Naive thymus-derived CD4-positive, alpha-beta T cell (primary cell): ENCODE measurements at regions of chr22 and their contacts with region 1.

Region 1: DNA sequence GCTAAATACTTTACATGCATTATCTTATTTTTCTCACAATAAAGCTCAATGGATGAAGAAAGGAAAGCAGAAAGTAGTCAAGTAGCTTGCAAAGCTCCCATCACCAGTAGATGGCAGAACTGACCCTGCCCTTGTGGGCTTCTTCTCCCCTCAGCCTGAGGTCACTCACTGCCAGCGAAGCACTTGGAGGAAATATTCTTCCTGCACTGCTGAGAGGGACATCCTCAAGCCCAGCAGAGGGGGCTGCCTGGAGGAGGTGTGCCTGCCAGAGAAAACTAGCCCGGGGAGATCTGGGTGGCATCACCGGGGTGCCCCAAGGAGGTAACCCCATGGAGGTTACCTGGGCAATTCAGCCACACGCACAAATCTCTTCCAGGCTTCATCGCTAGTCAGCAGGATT is 6.6 kb downstream of the APOL4 start:
- DNase-seq: peak in 7 of 9 donors; percentile 15 to 41 (median 32)
- ATAC-seq: peak; percentile 77
- H3K4me3 ChIP-seq: no peak overlapping the region
- H3K4me3 Mint-ChIP-seq: no peak overlapping the region
- H3K27ac ChIP-seq: no peak overlapping the region
- H3K27ac Mint-ChIP-seq: no peak overlapping the region
- H3K4me1 ChIP-seq: peaks cover 0 to 4% of the 10 kb centered on the region in 2 donors
- H3K4me1 Mint-ChIP-seq: peaks cover 0 to 23% (median 14%) of the 10 kb centered on the region in 7 donors
- H3K27me3 ChIP-seq: no peaks in the 10 kb centered on the region
- H3K27me3 Mint-ChIP-seq: peaks cover 0 to 16% (median 0%) of the 10 kb centered on the region in 5 donors

Region 2: DNA sequence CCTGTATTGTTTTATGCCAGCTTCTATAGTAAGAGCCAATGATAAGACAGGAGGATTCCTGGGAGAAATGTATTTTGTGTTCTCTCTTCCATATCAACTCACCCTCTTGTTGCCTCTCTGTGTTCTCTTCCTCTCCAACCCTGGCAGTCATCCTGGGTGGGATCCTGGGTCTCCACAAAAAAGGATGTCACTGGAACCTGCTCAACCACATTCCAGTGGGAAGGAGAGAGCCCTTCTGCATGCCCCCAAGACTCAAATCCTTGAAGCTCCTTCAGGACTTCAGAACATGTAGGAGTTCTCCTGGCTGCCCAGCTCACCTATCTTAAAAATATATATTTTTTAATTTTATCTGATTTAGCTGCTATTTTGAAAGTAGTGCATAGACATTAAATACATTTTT is 520.6 kb before region 1 on chr22:
- CTCF ChIA-PET with region 1: no interaction called
- POLR2A ChIA-PET with region 1: no interaction called
- intact Hi-C with region 1: no loop called
- DNase-seq: no peak
- ATAC-seq: no peak
- H3K4me3 ChIP-seq: no peak overlapping the region
- H3K4me3 Mint-ChIP-seq: no peak overlapping the region
- H3K27ac ChIP-seq: no peak overlapping the region
- H3K27ac Mint-ChIP-seq: no peak overlapping the region
- H3K4me1 ChIP-seq: no peaks in the 10 kb centered on the region
- H3K4me1 Mint-ChIP-seq: peaks cover 0 to 3% (median 0%) of the 10 kb centered on the region in 7 donors
- H3K27me3 ChIP-seq: no peaks in the 10 kb centered on the region
- H3K27me3 Mint-ChIP-seq: no peaks in the 10 kb centered on the region

Region 3: DNA sequence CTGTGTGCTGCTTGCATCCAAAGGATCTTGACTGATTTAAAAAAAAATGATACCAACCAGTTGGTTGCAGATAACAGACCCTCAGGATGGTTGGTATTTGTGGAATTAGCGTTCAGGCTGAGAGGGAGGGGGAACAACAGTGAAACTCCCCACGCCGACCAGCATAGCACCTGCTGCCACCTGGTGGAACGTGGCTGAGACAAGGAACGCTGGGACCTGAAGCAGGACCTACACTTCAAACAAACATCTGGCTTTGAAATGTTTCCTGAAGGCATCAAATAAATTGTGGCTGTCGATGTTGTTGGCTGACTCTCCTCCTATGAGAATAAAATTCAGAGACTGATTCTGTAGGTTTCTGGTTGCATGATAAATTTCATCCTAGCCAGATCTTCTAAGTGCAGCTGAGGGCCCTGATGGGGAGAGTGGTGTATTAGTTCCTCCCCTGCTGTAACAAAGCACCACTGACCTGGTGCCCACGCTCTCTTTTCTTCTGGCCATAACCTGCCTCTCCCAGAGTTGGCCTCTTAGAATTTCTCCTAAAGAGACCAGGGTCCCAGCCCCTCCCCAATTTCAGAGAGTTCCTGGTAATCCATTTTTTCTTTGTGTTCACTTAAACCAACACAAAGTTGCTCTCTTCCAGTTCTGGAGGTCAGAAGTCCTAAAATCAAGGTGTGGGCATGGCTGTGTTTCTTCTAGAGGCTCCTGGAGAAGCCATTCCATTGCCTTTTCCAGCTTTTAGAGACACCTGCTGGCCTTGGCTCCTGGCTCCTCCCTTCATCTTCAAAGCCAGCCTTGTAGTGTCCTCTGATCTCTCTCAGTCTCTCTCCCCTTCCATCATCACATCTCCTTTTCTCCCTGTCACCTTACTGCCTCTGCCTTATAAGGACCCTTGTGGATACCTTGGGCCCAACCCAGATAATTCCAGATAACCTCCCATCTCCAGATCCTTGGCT is 27.1 kb after region 1 on chr22:
- CTCF ChIA-PET with region 1: no interaction called
- POLR2A ChIA-PET with region 1: no interaction called
- intact Hi-C with region 1: loop called (anchors 1 to 2 kb)
- DNase-seq: peak in 8 of 9 donors; percentile 12 to 41 (median 26)
- ATAC-seq: peak; percentile 93
- H3K4me3 ChIP-seq: no peak overlapping the region
- H3K4me3 Mint-ChIP-seq: peak overlapping the region in 8 of 10 donors; percentile 22 to 73 (median 60)
- H3K27ac ChIP-seq: no peak overlapping the region
- H3K27ac Mint-ChIP-seq: peak overlapping the region in 4 of 9 donors; percentile 28 to 57 (median 46)
- H3K4me1 ChIP-seq: no peaks in the 10 kb centered on the region
- H3K4me1 Mint-ChIP-seq: peaks cover 8 to 16% (median 13%) of the 10 kb centered on the region in 7 donors
- H3K27me3 ChIP-seq: no peaks in the 10 kb centered on the region
- H3K27me3 Mint-ChIP-seq: peaks cover 0 to 29% (median 3%) of the 10 kb centered on the region in 5 donors

Region 4: DNA sequence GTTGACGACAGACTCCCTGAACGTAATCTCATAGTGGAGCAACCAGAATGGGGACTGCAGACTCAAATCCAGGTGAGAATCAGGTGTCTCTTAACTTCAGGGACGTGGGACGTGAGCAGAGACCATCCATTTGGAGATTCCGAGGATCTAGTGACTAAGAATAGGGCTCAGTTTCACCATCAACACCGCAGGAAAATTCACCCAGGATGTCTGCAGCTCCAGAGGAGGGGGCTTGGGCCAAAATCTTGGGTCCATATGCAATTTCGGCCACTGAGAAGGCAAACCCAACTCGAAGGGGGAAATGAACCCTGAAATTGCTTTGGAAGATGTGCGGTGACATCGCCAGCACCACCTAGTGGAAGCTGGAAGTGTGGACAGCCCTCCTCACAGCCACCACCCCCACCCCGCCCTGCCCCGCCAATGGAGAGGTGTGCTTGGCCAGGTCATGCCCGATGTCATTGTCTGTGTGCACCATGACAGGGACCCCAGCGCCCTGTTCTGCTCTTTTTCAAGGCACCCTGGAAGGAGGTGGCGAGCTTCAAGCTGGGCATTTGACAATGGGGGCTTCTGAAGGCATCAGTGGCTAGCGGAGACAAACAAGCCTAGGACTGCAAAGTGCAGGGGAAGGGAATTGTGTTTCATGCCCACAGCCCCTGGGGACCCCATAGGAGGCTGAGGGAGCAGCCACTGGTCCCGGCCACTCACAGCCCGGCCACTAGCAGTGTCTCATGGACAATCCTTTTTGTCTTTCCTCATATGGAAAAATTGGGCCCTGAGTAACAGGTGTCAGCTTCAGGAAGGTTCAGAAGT is 82.7 kb after region 1 on chr22:
- CTCF ChIA-PET with region 1: interaction called, 7 read pairs
- POLR2A ChIA-PET with region 1: interaction called, 3 read pairs
- intact Hi-C with region 1: loop called (anchors 1 kb)
- DNase-seq: peak in 8 of 9 donors; percentile 26 to 66 (median 54)
- ATAC-seq: peak; percentile 89
- H3K4me3 ChIP-seq: no peak overlapping the region
- H3K4me3 Mint-ChIP-seq: peak overlapping the region in 3 of 10 donors; percentile 12 to 51 (median 21)
- H3K27ac ChIP-seq: no peak overlapping the region
- H3K27ac Mint-ChIP-seq: peak overlapping the region; percentile 31 to 88 (median 63)
- H3K4me1 ChIP-seq: peaks cover 10 to 16% of the 10 kb centered on the region in 2 donors
- H3K4me1 Mint-ChIP-seq: peaks cover 9 to 24% (median 15%) of the 10 kb centered on the region in 7 donors
- H3K27me3 ChIP-seq: no peaks in the 10 kb centered on the region
- H3K27me3 Mint-ChIP-seq: no peaks in the 10 kb centered on the region

Region 5: DNA sequence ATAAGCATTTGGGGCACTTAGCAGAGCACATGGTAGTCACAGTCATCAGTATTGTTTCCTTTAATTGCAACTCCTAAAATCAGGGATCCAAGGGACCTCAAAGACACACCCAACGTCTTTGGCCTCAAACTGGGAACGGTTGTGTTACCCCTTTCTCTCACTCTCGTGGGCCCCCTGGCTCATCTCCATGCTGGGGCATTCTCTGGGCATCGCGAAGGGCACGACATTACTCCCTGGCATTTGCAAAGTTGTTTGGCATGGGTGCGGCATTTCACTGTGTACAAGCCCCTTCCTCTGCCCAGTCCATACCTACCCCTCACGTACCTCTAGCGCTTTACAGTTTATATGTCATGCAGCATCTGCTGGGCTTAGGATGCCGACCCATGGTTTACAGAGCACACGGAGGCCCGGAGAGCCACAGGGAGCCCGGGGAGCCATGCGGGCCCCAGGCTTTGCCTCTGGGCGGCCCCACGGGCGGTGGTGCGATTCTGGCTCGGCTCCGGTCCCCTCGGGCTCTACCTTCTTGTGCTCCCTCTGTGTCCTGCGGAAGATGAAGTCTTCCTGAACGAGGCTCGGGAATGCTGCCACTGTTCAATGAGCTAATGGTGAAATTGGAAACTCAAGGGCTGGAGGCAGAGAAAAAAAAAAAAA is 530.5 kb after region 1 on chr22:
- CTCF ChIA-PET with region 1: no interaction called
- POLR2A ChIA-PET with region 1: no interaction called
- intact Hi-C with region 1: no loop called
- DNase-seq: no peak
- ATAC-seq: no peak
- H3K4me3 ChIP-seq: no peak overlapping the region
- H3K4me3 Mint-ChIP-seq: no peak overlapping the region
- H3K27ac ChIP-seq: no peak overlapping the region
- H3K27ac Mint-ChIP-seq: no peak overlapping the region
- H3K4me1 ChIP-seq: no peaks in the 10 kb centered on the region
- H3K4me1 Mint-ChIP-seq: no peaks in the 10 kb centered on the region
- H3K27me3 ChIP-seq: no peaks in the 10 kb centered on the region
- H3K27me3 Mint-ChIP-seq: peaks cover 17 to 53% (median 40%) of the 10 kb centered on the region in 5 donors

Region 6: GRCh38 chr22:38181453-38182247 is 1986.7 kb after region 1 on chr22 and contains the start of gene PLA2G6:
- CTCF ChIA-PET with region 1: no interaction called
- POLR2A ChIA-PET with region 1: no interaction called
- intact Hi-C with region 1: no loop called
- DNase-seq: peak; percentile 86 to 99 (median 90)
- ATAC-seq: peak; percentile 96
- H3K4me3 ChIP-seq: peak within 1 kb of the TSS; percentile 90
- H3K4me3 Mint-ChIP-seq: peak within 1 kb of the TSS; percentile 88 to 100 (median 94)
- H3K27ac ChIP-seq: peak within 1 kb of the TSS; percentile 67
- H3K27ac Mint-ChIP-seq: peak within 1 kb of the TSS; percentile 36 to 94 (median 89)
- H3K4me1 ChIP-seq: peaks cover 16 to 30% of the 10 kb centered on the region in 2 donors
- H3K4me1 Mint-ChIP-seq: peaks cover 34 to 50% (median 42%) of the 10 kb centered on the region in 7 donors
- H3K27me3 ChIP-seq: no peaks in the 10 kb centered on the region
- H3K27me3 Mint-ChIP-seq: peaks cover 0 to 14% (median 0%) of the 10 kb centered on the region in 5 donors
- total RNA-seq, gene PLA2G6: 66.5 to 252 (median 105) TPM